ENCODE measurements at regions of chr19 and their contacts with region 1.

Region 1: GRCh38 chr19:49869441-49870176 is 2.2 kb upstream of the PNKP start:
- DNase-seq: peak; percentile 97 to 100
- H3K4me3 ChIP-seq: peak overlapping the region; percentile 38
- H3K4me1 ChIP-seq: peaks cover 21% of the 10 kb centered on the region
- H3K27me3 ChIP-seq: no peaks in the 10 kb centered on the region

Region 2: GRCh38 chr19:49487277-49488045 is 382.1 kb before region 1 on chr19 and contains the start of gene RPL13A:
- in situ Hi-C with region 1: loop called (anchors 25 kb)
- DNase-seq: peak; percentile 96 to 100
- H3K4me3 ChIP-seq: peak within 1 kb of the TSS; percentile 100
- H3K4me1 ChIP-seq: peaks cover 4% of the 10 kb centered on the region; the same call in 1 of the 2 replicates
- H3K27me3 ChIP-seq: no peaks in the 10 kb centered on the region

Measured in HAP-1 (cell line).